Psoas muscle (tissue), 8 donors: ENCODE measurements at regions of chrX and their contacts with region 1.

Region 1: GRCh38 chrX:75901326-75901725 is 116.3 kb upstream of the MAGEE2 start:
- DNase-seq: no peak
- ATAC-seq: no peak
- H3K4me3 ChIP-seq: no peak overlapping the region
- H3K27ac ChIP-seq: no peak overlapping the region
- H3K4me1 ChIP-seq: no peaks in the 10 kb centered on the region
- H3K27me3 ChIP-seq: no peaks in the 10 kb centered on the region
- CTCF ChIP-seq: no peak

Region 2: DNA sequence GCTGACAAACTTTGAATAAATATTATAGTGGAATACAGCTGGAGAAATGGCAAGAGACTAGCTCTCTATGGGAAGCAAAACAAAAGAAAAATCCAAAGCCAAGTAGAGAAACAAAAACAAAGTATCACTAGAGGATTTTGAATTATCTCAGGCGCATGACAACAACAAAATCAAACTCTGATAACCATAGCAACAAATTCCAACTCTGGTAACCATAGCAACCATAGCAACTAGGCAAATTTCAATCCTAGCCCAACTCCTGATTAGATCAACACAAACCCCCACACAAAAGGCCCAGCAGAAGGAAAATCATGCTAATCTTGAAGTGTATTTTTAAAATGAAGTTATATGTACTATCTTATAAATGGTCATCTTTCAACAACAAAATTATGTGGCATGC is 17.9 kb before region 1 on chrX:
- intact Hi-C with region 1: loop called in 1 of 2 experiments (anchors 1 kb)
- DNase-seq: no peak
- ATAC-seq: no peak
- H3K4me3 ChIP-seq: no peak overlapping the region
- H3K27ac ChIP-seq: no peak overlapping the region
- H3K4me1 ChIP-seq: no peaks in the 10 kb centered on the region
- H3K27me3 ChIP-seq: peaks cover 0 to 19% (median 0%) of the 10 kb centered on the region in 3 donors
- CTCF ChIP-seq: no peak